A673 (cell line): ENCODE measurements at regions of chr1 and their contacts with region 1.

Region 1: GRCh38 chr1:229410692-229411443 is 23.0 kb downstream of the ACTA1 start:
- DNase-seq: peak; percentile 67
- H3K4me3 ChIP-seq: no peak overlapping the region
- H3K27ac ChIP-seq: no peak overlapping the region
- H3K4me1 ChIP-seq: peaks cover 10% of the 10 kb centered on the region
- H3K27me3 ChIP-seq: no peaks in the 10 kb centered on the region
- CTCF ChIP-seq: no peak

Region 2: DNA sequence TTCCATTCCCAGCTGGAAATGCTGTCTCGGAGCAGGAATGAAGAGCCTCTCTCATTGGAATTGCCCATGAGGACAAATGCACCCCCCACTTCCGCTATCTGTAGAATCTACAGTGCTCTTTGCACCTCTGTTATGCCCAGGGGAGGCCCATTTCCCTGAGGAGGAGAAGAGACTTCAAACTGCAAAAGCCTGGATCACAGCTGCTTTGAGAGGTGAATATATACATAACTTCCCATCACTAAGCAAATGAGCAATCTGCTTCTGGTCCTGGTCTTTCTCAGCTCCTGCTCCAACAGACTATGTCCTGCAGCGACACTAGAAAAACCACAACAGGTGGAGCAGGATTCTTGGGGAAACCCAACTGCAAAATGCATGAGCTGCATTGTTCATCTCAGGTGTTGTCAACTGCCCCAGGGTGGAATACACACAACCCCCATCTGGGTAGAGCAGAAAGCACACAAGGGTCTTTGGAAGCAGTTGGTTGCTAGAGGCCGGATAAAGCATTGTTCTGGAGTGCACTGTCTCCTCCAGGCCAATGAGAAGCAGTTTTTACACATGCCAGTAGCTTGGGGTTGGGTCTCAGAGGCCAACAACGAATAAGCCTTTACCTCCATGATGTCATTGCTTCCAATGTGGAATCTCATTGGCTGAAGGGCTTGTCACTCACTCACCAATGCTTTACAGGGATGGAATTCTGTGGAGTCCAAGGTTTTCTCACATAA is 207.7 kb before region 1 on chr1:
- CTCF ChIA-PET with region 1: no interaction called
- POLR2A ChIA-PET with region 1: no interaction called
- intact Hi-C with region 1: no loop called
- DNase-seq: peak; percentile 76
- H3K4me3 ChIP-seq: no peak overlapping the region
- H3K27ac ChIP-seq: no peak overlapping the region
- H3K4me1 ChIP-seq: peaks cover 21% of the 10 kb centered on the region
- H3K27me3 ChIP-seq: no peaks in the 10 kb centered on the region
- CTCF ChIP-seq: no peak

Region 3: GRCh38 chr1:229370601-229371021 is 40.3 kb before region 1 on chr1:
- CTCF ChIA-PET with region 1: no interaction called
- POLR2A ChIA-PET with region 1: no interaction called
- intact Hi-C with region 1: loop called (anchors 1 kb)
- DNase-seq: peak; percentile 80
- H3K4me3 ChIP-seq: no peak overlapping the region
- H3K27ac ChIP-seq: no peak overlapping the region
- H3K4me1 ChIP-seq: peaks cover 9% of the 10 kb centered on the region
- H3K27me3 ChIP-seq: peaks cover 7% of the 10 kb centered on the region
- CTCF ChIP-seq: peak; percentile 21; the same call in 1 of the 2 replicates

Region 4: GRCh38 chr1:229440851-229441537 is 30.1 kb after region 1 on chr1:
- CTCF ChIA-PET with region 1: interaction called, 18 read pairs
- POLR2A ChIA-PET with region 1: no interaction called
- intact Hi-C with region 1: no loop called
- DNase-seq: no peak
- H3K4me3 ChIP-seq: no peak overlapping the region
- H3K27ac ChIP-seq: no peak overlapping the region
- H3K4me1 ChIP-seq: no peaks in the 10 kb centered on the region
- H3K27me3 ChIP-seq: no peaks in the 10 kb centered on the region
- CTCF ChIP-seq: no peak